Mucosa of descending colon (tissue), 3 donors: ENCODE measurements at regions of chr3 and their contacts with region 1.

Region 1: GRCh38 chr3:11803977-11804892 is 42.5 kb downstream of the TAMM41 start:
- DNase-seq: peak in 1 of 3 donors; percentile 51
- ATAC-seq: peak; percentile 87
- H3K4me3 ChIP-seq: no peak overlapping the region
- H3K4me1 ChIP-seq: no peaks in the 10 kb centered on the region
- CTCF ChIP-seq: peak; percentile 18

Region 2: GRCh38 chr3:11379233-11379823 is 424.9 kb before region 1 on chr3:
- intact Hi-C with region 1: loop called in 1 of 2 experiments (anchors 10 kb)
- DNase-seq: peak in 1 of 3 donors; percentile 63
- ATAC-seq: peak; percentile 60
- H3K4me3 ChIP-seq: no peak overlapping the region
- H3K4me1 ChIP-seq: no peaks in the 10 kb centered on the region
- CTCF ChIP-seq: no peak

Region 3: GRCh38 chr3:12218161-12218560 is 413.9 kb after region 1 on chr3:
- intact Hi-C with region 1: no loop called
- DNase-seq: no peak
- ATAC-seq: no peak
- H3K4me3 ChIP-seq: no peak overlapping the region
- H3K4me1 ChIP-seq: peaks cover 14% of the 10 kb centered on the region
- CTCF ChIP-seq: no peak